ENCODE measurements at regions of chr17 and their contacts with region 1.

Region 1: GRCh38 chr17:39547713-39548478 is 59.8 kb downstream of the NEUROD2 start:
- DNase-seq: peak; percentile 67
- H3K4me3 ChIP-seq: no peak overlapping the region
- H3K27ac ChIP-seq: peak overlapping the region; percentile 20
- H3K4me1 ChIP-seq: peaks cover 31% of the 10 kb centered on the region
- H3K27me3 ChIP-seq: no peaks in the 10 kb centered on the region
- CTCF ChIP-seq: peak; percentile 93

Region 2: GRCh38 chr17:39393736-39394135 is 154.2 kb before region 1 on chr17:
- intact Hi-C with region 1: no loop called
- DNase-seq: no peak
- H3K4me3 ChIP-seq: no peak overlapping the region
- H3K27ac ChIP-seq: no peak overlapping the region
- H3K4me1 ChIP-seq: peaks cover 47% of the 10 kb centered on the region
- H3K27me3 ChIP-seq: no peaks in the 10 kb centered on the region
- CTCF ChIP-seq: peak; percentile 39

Region 3: GRCh38 chr17:39429600-39429999 is 118.3 kb before region 1 on chr17:
- intact Hi-C with region 1: no loop called
- DNase-seq: no peak
- H3K4me3 ChIP-seq: no peak overlapping the region
- H3K27ac ChIP-seq: no peak overlapping the region
- H3K4me1 ChIP-seq: peaks cover 8% of the 10 kb centered on the region
- H3K27me3 ChIP-seq: no peaks in the 10 kb centered on the region
- CTCF ChIP-seq: no peak

Region 4: DNA sequence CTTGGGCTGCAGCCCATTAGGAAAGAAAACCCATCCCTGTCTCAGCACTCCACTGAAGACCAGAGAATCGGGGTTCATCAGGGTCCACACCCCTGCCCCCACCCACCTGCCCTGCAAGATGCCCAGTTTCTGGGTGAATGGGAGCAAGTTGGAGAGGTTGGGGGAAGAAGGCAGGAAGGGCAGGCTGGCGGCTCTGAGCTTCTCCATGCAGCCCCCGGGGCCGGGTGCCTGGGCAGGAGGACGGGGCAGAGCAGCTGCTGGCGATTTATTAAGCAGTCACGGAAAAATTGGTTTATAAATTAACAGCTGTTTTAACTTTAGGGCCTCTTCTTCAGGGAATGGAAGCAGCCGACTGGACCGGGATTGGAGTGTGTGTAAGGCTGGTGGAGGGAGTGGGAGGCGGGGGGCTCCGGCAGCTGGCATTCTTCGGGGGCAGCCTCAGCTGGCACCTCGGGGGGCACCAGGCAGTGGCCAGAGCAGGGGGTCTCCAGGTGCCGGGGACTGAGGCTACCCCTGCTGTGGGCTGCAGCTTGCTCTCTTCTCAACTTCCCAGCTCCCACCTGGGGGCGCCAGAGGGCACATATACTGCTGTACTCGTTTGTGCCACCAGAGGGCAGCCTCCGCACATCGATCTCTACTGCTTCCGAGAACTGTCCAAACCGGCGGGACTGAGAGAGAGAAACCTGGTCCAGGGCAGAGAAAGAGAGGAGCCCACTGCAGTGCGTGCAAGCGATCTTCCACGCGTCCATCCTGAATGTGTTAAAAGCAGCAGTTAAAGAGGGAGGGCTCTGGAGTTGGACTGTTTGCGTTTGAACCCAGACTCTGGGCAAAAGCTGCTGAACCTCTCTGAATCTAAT is 73.9 kb after region 1 on chr17:
- intact Hi-C with region 1: loop called (anchors 5 kb)
- DNase-seq: peak; percentile 85
- H3K4me3 ChIP-seq: no peak overlapping the region
- H3K27ac ChIP-seq: no peak overlapping the region
- H3K4me1 ChIP-seq: peaks cover 31% of the 10 kb centered on the region
- H3K27me3 ChIP-seq: peaks cover 35% of the 10 kb centered on the region
- CTCF ChIP-seq: peak; percentile 100